Activated CD4-positive, alpha-beta T cell treated with anti-CD3 and anti-CD28 coated beads for 36 hours (primary cell): ENCODE measurements at regions of chr2 and their contacts with region 1.

Region 1: GRCh38 chr2:176096986-176097819 is 2.4 kb upstream of the HOXD12 start:
- DNase-seq: peak; percentile 78
- ATAC-seq: peak; percentile 86
- H3K4me3 Mint-ChIP-seq: peak overlapping the region; percentile 50
- H3K27ac Mint-ChIP-seq: no peak overlapping the region
- H3K4me1 Mint-ChIP-seq: peaks cover 27% of the 10 kb centered on the region
- H3K27me3 Mint-ChIP-seq: peaks cover 77% of the 10 kb centered on the region

Region 2: DNA sequence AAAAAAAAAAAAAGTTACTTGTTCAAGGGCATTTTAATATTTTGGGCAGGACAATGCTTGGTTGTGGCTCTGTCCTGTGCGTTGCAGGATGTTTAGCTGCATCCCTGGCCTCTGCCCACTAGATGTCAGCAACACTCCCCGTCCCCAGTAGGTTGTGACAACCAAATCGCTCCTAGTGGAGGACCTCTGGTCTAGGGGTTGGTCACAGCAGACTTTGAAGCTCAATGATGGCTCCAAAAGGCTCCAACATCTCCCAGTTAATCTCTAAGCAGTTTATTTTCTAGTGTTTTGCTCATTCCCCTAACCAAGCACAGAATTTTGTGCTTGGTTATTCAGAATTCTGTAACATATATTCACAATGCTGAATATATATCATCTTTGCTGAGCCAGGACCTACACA is 1399.9 kb before region 1 on chr2:
- CTCF ChIA-PET with region 1: no interaction called
- POLR2A ChIA-PET with region 1: no interaction called
- intact Hi-C with region 1: loop called in 1 of 2 experiments (anchors 5 kb)
- DNase-seq: peak; percentile 80
- ATAC-seq: peak; percentile 99
- H3K4me3 Mint-ChIP-seq: no peak overlapping the region
- H3K27ac Mint-ChIP-seq: no peak overlapping the region
- H3K4me1 Mint-ChIP-seq: no peaks in the 10 kb centered on the region
- H3K27me3 Mint-ChIP-seq: peaks cover 3% of the 10 kb centered on the region

Region 3: DNA sequence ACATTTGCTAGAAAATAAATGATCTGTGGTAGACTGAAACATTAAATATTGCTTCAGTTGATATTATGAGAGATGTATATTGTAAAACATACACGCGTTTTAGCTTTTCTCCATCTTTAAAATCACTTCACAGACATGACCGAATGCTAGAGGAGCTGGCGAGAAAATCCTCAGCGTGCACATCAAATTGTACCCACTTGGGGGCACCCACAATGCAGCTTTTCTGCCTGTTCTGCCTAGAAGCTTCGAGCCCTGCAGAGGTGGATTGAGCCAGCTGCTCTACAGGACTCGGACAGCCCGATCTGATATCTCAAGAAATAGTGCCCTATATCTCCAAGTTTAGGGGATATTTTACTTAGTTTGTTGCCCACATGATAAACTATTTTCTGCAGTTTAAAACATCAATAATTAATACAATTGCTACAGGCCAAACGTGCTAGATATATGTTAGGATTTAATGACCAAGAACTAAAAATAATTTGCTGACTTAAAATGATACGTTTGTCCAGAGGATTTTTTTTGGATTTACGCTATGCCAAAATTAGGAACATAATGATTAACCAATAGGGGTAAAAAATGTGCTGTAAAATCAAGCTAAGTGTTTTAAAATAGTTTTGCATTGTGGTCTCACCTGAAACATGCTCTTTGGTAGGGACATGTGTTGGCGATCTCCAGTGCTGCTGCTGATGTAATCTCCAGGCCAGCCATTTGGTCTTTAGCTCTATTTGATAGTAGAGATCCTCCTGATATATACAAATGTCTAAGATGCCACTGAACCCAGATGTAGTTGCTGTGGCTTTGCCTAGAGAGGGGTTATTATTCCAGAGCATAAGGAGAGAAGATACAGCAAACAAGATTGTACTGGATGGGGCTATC is 893.3 kb before region 1 on chr2:
- CTCF ChIA-PET with region 1: interaction called, 4 read pairs
- POLR2A ChIA-PET with region 1: no interaction called
- intact Hi-C with region 1: loop called in 1 of 2 experiments (anchors 2 kb)
- DNase-seq: peak; percentile 79
- ATAC-seq: peak; percentile 98
- H3K4me3 Mint-ChIP-seq: no peak overlapping the region
- H3K27ac Mint-ChIP-seq: no peak overlapping the region
- H3K4me1 Mint-ChIP-seq: peaks cover 4% of the 10 kb centered on the region
- H3K27me3 Mint-ChIP-seq: peaks cover 10% of the 10 kb centered on the region

Region 4: DNA sequence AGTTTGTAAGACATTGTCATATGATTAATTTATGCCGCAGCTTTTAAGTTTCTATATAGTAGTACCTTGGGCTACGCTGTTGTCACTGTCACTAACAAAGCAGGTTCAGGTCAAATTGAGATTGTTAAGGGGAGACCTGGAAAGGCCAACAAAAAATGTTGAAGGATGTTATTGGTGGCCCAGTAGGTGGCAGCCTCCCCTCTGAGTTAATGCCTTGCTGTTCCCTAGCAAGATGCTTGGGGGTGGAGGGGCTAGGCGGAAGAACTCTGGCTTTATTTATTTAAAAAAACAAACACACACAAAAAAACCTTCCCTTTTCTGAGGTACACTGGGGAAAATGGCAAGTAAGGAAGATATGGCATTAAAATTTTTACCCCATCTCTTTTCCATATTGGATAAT is 787.4 kb before region 1 on chr2:
- CTCF ChIA-PET with region 1: no interaction called
- POLR2A ChIA-PET with region 1: no interaction called
- intact Hi-C with region 1: loop called in 1 of 2 experiments (anchors 5 kb)
- DNase-seq: peak; percentile 39
- ATAC-seq: no peak
- H3K4me3 Mint-ChIP-seq: no peak overlapping the region
- H3K27ac Mint-ChIP-seq: no peak overlapping the region
- H3K4me1 Mint-ChIP-seq: no peaks in the 10 kb centered on the region
- H3K27me3 Mint-ChIP-seq: peaks cover 12% of the 10 kb centered on the region

Region 5: GRCh38 chr2:175690113-175690837 is 406.9 kb before region 1 on chr2:
- CTCF ChIA-PET with region 1: interaction called, 86 read pairs
- POLR2A ChIA-PET with region 1: no interaction called
- intact Hi-C with region 1: loop called (anchors 1 kb)
- DNase-seq: peak; percentile 19
- ATAC-seq: no peak
- H3K4me3 Mint-ChIP-seq: no peak overlapping the region
- H3K27ac Mint-ChIP-seq: no peak overlapping the region
- H3K4me1 Mint-ChIP-seq: no peaks in the 10 kb centered on the region
- H3K27me3 Mint-ChIP-seq: peaks cover 18% of the 10 kb centered on the region

Region 6: DNA sequence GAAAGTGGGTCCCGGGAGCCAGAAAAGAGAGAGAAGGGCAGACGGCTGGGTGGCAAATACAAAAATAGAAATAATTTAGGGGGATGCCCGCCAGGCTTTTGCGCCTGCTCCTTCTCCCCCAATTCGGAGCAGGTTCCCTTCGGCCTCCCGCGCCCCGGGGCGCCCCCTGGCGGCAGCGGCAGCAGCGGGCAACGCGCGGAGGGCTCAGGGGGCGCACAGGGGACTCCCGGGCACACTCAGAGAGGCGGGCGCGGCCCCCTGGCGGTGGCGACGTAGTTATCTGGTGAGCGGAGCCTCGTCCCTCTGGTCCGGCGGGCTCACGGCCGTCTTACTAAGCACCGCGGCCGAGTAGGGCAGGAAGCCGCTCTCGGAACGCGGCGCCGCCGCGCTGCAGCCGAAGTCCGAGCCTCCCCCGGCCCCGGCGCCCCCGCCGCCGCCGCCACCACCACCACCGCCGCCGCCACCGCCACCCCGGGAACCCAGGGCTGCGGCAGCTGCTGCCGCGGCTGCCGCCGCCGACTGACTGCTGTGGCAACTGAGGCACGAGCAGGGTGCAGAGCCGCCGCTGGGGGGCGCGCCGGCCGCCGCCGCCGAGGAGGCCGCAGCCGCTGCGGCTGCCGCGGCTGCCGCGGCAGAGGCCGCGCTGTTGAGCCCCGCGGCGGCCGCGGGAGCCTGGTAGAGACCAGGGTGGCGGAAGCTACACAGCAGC is 17.2 kb before region 1 on chr2:
- CTCF ChIA-PET with region 1: interaction called, 10 read pairs
- POLR2A ChIA-PET with region 1: no interaction called
- intact Hi-C with region 1: loop called (anchors 1 kb)
- DNase-seq: peak; percentile 63
- ATAC-seq: peak; percentile 47
- H3K4me3 Mint-ChIP-seq: peak overlapping the region; percentile 46
- H3K27ac Mint-ChIP-seq: no peak overlapping the region
- H3K4me1 Mint-ChIP-seq: peaks cover 13% of the 10 kb centered on the region
- H3K27me3 Mint-ChIP-seq: peaks cover 70% of the 10 kb centered on the region

Region 7: DNA sequence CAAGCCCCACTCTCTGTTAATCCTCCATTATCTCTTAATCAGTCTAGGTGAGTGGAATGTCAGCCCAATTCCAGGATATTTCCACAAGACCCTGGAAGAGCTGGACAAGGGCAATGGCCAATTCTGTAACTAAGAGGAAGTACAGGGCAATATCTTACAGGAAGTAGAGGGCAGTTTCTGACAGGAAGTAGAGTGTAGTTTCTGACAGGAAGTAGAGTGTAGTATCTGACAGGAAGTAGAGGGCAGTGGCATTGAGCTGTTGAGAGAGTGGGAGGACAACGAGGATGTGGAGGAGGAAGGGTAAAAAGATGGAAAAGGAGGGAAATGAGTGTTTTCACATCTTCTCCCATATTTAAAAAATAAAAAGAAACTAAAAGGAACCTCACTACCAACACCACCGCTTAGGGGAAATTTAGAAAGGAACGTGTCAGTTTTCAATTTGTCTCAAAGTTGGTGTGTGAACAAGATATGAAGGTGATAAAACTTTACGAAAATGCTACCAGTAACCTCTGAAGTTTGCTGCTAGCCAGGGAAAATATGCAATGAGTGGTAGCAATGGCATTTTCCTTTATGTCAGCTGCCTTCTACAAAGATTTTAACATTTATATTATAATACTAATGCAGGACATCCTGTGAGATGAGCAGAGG is 684.5 kb after region 1 on chr2:
- CTCF ChIA-PET with region 1: no interaction called
- POLR2A ChIA-PET with region 1: no interaction called
- intact Hi-C with region 1: no loop called
- DNase-seq: no peak
- ATAC-seq: peak; percentile 44
- H3K4me3 Mint-ChIP-seq: no peak overlapping the region
- H3K27ac Mint-ChIP-seq: peak overlapping the region; percentile 7
- H3K4me1 Mint-ChIP-seq: peaks cover 4% of the 10 kb centered on the region
- H3K27me3 Mint-ChIP-seq: no peaks in the 10 kb centered on the region